AG04450 (cell line): ENCODE measurements at regions of chr6 and their contacts with region 1.

Region 1: GRCh38 chr6:149863697-149864577 is at the start of gene LRP11:
- DNase-seq: no peak
- H3K4me3 ChIP-seq: peak within 1 kb of the TSS; percentile 51
- H3K27ac ChIP-seq: peak within 1 kb of the TSS; percentile 80
- H3K27me3 ChIP-seq: no peaks in the 10 kb centered on the region
- CTCF ChIP-seq: no peak
- polyA plus RNA-seq, gene LRP11: 64.3 and 71.0 TPM in 2 replicates

Region 2: DNA sequence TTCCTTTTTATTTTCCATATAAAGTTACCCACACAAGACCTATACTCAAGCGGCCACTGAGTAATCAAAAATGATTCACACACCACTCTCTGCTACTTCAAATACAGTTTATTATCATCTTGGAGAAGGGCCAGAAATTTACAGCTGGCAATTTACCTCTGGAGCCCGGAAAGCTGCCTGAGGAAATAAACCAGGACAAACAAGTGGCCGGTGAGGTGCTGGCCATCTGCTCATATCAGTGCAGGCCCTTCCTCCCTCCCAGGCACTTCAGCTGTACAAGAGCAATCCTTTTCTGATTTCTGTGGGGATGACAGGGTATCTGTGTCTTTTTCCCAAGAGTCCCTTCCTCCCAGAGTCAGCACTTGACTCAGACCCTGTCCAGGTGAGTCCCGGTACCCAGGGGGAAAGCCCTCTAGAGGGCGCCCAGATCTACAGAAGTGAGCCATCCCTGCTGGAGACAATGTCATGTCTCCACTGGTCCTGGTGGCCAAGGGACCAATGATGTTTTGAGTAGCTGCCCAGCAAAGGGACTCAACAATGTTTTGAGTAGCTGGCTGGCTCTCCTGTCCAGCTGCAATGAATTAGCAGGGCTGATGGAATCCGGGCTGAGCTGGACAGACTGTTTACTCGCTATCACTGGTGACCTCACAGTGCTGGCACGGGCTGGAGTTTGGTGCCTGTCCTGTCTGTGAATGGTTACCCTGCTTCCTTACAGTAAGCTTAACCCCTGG is 23.4 kb before region 1 on chr6:
- CTCF ChIA-PET with region 1: interaction called, 21 read pairs
- POLR2A ChIA-PET with region 1: interaction called, 4 read pairs
- DNase-seq: peak; percentile 70
- H3K4me3 ChIP-seq: no peak overlapping the region
- H3K27ac ChIP-seq: peak overlapping the region; percentile 92
- H3K27me3 ChIP-seq: no peaks in the 10 kb centered on the region
- CTCF ChIP-seq: peak; percentile 42